AG04449 (cell line): ENCODE measurements at regions of chr2 and their contacts with region 1.

Region 1: GRCh38 chr2:170973492-170974303 is 44.6 kb downstream of the GORASP2 start:
- DNase-seq: no peak
- H3K4me3 ChIP-seq: peak overlapping the region; percentile 76
- CTCF ChIP-seq: peak; percentile 83

Region 2: DNA sequence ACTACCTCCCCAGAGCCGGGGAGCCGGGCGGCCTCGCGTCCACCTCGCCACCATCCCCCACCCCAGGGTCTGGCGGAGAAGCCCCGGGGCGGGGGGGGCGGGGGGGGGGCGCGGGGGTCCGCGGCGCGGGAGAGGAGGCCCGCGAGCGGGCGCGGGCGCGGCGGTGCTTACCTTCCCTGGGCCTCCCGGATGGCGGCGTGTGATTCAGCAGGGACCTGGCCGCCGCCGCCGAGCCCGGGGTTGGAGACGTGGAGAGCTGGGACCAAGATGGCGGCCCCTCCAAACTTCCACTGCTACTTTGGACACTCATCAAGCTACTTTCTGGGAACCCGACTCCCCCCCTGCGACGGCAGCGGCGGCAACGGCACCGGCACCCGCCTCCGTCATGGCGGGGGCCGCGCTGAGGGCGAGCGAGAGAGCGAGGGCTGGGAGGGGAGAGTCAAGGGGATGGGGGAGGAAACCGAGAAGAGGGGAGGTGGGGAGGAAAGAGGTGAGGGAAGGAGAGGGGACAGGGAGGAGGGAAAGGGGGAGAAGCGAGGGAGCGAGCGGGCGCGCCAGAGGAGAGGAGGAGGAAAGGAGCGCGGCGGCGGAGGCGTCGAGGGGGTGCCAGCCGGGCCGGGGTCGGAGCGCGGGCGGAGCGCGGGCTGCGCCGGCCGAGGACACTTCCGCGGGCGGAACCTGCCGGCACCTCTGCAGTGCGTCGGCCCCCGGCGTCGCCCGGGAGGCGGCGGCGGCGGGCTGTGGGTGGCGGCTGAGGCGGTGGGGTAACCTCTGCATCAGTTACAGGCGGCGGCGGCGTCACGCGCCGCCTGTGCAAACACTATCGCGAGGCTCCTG is 186.6 kb after region 1 on chr2 and contains the start of gene TLK1:
- CTCF ChIA-PET with region 1: interaction called, 40 read pairs
- POLR2A ChIA-PET with region 1: interaction called, 3 read pairs
- DNase-seq: no peak
- H3K4me3 ChIP-seq: peak within 1 kb of the TSS; percentile 91
- CTCF ChIP-seq: no peak

Region 3: DNA sequence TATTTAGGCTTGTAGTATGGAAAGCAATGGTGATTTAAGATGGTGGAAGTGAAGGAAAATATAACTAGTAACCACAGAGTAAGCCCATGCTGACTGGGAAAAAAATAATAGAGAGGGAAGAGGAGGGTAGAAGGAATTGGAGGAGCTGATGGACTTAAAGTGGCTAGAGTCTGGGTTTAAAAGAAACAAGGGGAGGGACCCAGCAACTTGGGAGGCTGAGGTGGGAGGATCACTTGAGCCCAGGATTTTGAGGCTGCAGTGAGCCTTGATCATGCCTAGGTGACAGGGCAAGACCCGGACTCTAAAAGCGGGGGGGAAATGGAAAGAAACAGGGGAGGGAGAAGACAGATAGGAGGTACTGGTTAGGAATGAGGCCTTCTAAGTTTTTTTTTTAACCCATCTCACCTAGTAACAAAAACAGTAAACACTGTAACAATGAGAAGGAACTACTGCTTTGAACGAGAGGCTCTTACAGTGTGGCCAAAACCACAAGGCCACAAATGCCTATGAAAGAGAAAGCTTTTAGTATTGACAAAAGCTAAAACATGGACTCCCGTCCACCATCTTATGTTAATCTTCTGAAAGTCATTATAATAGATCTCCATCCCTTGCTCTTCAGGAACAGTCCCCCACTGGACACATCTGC is 433.5 kb after region 1 on chr2:
- CTCF ChIA-PET with region 1: interaction called, 16 read pairs
- POLR2A ChIA-PET with region 1: no interaction called
- DNase-seq: no peak
- H3K4me3 ChIP-seq: no peak overlapping the region
- CTCF ChIP-seq: no peak

Region 4: DNA sequence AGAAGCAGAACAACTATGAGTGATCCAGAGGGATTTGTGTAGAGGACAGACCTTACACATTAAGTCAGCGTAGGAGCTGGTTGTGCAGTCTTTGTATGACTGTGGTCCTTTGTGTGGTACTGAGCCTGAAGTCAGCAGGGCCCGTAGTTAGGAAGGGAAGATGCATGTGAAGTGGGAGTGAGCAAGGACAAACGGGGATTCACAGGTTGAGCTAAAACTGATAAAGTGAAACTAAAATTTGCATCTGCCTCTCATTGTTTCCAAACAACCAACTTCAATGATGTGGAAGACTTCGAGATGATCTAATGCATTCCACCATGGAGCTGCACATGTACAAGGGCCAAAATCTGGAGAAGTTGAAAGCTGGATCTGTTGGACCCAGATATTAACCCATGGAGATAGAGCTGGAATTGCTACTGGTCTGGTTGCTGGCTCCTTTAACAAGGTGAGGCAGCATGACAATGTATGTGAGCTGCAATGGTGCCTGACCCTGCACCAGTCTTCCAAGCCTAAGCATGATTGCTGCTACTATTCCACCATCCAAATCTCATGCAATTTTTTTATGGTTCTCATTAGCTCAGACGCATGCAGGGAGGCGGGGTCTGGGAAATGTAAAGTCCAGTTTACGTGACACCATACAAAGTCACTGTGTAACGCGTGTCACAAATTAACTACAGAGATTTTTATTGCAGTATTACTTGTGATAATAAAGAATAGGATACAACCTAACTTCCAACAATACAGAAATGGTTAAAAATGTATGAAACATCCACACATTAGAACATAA is 536.4 kb after region 1 on chr2:
- CTCF ChIA-PET with region 1: no interaction called
- POLR2A ChIA-PET with region 1: no interaction called
- DNase-seq: no peak
- H3K4me3 ChIP-seq: no peak overlapping the region
- CTCF ChIP-seq: no peak